Activated T-helper 1 cell treated with anti-CD3 and anti-CD28 coated beads, Interleukin-12 subunit alpha, Interleukin-12 subunit beta, Interleukin-2, Interleukin-4 antibody, amounts not matched to agents 30 ng/mL and 10 ng/mL and 1 ng/mL, durations not matched to agents 14 hours and 24 hours and 36 hours (primary cell): ENCODE measurements at regions of chr3 and their contacts with region 1.

Region 1: DNA sequence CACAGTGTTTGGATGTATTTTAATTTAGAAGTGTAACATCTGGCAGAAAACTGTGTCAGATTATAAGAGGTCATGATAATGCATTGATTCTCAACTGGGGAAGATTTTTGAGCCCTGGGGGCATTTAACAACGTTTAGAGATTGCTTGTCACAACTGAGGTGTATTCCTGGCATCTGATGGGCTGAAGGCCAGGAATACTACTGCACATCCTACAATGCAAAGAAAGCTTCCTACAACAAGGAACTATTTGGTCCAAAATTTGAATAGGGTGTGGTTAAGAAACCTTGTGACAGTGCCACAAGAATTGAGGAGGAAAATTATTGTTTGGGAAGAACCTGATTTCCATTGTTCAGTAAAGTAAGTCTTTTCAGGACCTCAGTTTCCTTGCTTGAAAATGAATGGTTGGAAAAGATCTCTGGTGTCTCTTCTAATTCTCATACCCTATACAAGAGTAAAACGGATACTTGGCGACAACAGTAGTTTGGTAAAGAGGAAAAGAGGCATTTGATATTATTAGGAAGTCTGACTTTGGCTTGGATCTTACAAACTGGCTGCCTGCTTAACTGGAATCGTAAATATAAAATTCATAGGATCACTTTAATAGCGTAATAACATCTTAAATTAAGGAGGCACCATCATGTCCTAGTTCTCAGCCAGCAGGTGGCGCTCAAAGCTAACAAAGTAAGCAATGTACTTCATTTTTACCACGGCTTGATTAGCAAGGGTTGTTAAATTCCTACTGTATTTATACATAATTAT is 4.3 kb downstream of the DAZL start:
- DNase-seq: peak; percentile 44
- H3K4me3 Mint-ChIP-seq: no peak overlapping the region
- H3K27ac Mint-ChIP-seq: no peak overlapping the region
- H3K4me1 Mint-ChIP-seq: peaks cover 29% of the 10 kb centered on the region
- H3K27me3 Mint-ChIP-seq: peaks cover 24% of the 10 kb centered on the region

Region 2: GRCh38 chr3:16309558-16309957 is 291.4 kb before region 1 on chr3:
- intact Hi-C with region 1: loop called (anchors 2 kb)
- DNase-seq: peak; percentile 50
- H3K4me3 Mint-ChIP-seq: peak overlapping the region; percentile 72
- H3K27ac Mint-ChIP-seq: peak overlapping the region; percentile 92
- H3K4me1 Mint-ChIP-seq: peaks cover 84% of the 10 kb centered on the region
- H3K27me3 Mint-ChIP-seq: no peaks in the 10 kb centered on the region

Region 3: DNA sequence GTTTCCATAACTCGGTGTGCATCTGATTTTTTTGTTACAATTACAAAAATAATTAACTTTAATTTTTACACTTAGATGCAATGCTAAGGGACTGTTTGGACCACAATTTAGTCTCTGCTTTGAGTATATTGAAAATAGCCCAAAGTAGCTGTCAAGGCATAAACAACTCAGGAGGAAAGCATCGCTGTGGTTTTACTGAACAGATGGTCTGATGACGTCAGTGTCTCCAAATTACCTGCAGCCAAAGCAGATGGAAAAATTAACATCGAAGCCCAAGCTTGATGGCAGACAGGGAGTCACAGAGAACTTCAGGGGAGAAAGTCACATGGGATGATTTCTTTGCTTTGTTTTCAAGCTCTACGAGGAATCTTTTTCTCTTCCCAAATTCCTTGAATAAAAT is 200.7 kb after region 1 on chr3:
- intact Hi-C with region 1: loop called (anchors 1 kb)
- DNase-seq: no peak
- H3K4me3 Mint-ChIP-seq: no peak overlapping the region
- H3K27ac Mint-ChIP-seq: peak overlapping the region; percentile 15
- H3K4me1 Mint-ChIP-seq: peaks cover 35% of the 10 kb centered on the region
- H3K27me3 Mint-ChIP-seq: peaks cover 4% of the 10 kb centered on the region

Region 4: GRCh38 chr3:17023006-17023664 is 422.2 kb after region 1 on chr3:
- intact Hi-C with region 1: loop called (anchors 1 kb)
- DNase-seq: peak; percentile 61
- H3K4me3 Mint-ChIP-seq: peak overlapping the region; percentile 47
- H3K27ac Mint-ChIP-seq: peak overlapping the region; percentile 75
- H3K4me1 Mint-ChIP-seq: peaks cover 58% of the 10 kb centered on the region
- H3K27me3 Mint-ChIP-seq: no peaks in the 10 kb centered on the region

Region 5: DNA sequence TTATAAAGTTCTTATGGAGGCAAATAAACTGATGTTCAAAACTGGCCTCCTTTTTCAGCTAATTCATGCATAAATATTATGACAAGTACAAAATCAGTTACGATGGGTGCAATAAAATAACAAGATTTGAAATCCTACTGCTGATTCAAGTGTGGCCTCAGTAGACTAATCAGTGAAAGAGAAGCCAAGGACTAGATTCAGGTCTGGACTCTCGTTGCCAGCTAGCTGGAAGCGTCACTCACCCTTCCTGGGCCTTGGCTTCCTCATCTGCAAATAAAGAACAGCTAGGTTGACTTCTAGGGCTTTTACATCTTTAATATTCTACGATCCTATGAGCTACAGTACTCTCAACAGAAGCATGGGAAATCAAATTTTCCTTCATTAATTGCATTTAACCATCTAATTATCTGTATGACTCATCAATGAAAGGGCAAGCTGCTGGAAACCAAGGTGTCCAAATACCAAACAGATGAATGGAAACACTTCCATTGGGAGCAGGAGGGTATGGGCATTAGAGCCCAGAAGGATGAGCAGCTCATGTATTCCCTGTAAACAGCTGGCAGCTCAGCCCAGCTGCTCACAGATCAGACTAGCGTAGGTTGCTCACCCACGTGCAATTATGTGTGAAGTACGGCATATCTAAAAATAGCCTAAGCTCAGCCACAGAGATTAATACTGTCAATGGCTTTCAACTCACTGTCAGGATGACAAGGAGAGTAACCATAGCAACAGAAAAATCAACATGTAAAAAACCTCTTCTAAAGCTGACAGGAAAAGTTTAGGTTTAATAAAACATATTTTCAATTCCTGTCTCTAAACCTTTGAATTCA is 578.6 kb after region 1 on chr3:
- intact Hi-C with region 1: loop called (anchors 1 kb)
- DNase-seq: no peak
- H3K4me3 Mint-ChIP-seq: no peak overlapping the region
- H3K27ac Mint-ChIP-seq: no peak overlapping the region
- H3K4me1 Mint-ChIP-seq: peaks cover 44% of the 10 kb centered on the region
- H3K27me3 Mint-ChIP-seq: peaks cover 12% of the 10 kb centered on the region

Region 6: GRCh38 chr3:17742108-17742879 is 1141.3 kb after region 1 on chr3 and contains the start of gene TBC1D5:
- intact Hi-C with region 1: loop called (anchors 2 kb)
- DNase-seq: peak; percentile 90
- H3K4me3 Mint-ChIP-seq: peak within 1 kb of the TSS; percentile 92
- H3K27ac Mint-ChIP-seq: peak within 1 kb of the TSS; percentile 97
- H3K4me1 Mint-ChIP-seq: peaks cover 56% of the 10 kb centered on the region
- H3K27me3 Mint-ChIP-seq: peaks cover 2% of the 10 kb centered on the region
- total RNA-seq, gene TBC1D5: 31.4 and 33.8 TPM in 2 replicates